ENCODE measurements at regions of chr22 and their contacts with region 1.

Region 1: GRCh38 chr22:38181453-38182247 is at the start of gene PLA2G6:
- DNase-seq: peak; percentile 86
- ATAC-seq: peak; percentile 91
- H3K4me3 ChIP-seq: peak within 1 kb of the TSS; percentile 48 to 59
- H3K27ac ChIP-seq: peak within 1 kb of the TSS; percentile 96
- H3K4me1 ChIP-seq: peaks cover 45% of the 10 kb centered on the region
- H3K27me3 ChIP-seq: no peaks in the 10 kb centered on the region
- CTCF ChIP-seq: no peak
- total RNA-seq, gene PLA2G6: 16.2 TPM

Region 2: DNA sequence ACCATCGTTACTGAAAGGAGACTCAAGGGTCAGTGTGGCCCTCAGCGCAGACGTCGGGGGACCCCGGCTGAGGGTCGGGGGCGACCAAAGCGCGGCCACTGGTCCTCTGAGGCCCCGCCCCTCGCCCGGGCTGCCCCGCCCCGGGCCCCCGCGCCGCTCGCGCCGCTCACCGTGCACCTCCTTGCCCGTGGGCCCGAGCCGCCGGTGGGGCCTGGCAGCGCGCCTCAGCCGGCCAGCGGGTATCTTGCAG is 338.0 kb before region 1 on chr22:
- CTCF ChIA-PET with region 1: no interaction called
- POLR2A ChIA-PET with region 1: no interaction called
- in situ Hi-C with region 1: no loop called
- intact Hi-C with region 1: no loop called
- DNase-seq: no peak
- ATAC-seq: peak; percentile 77
- H3K4me3 ChIP-seq: peak overlapping the region; percentile 65 to 86
- H3K27ac ChIP-seq: peak overlapping the region; percentile 86
- H3K4me1 ChIP-seq: 0 out of 2 replicates have a peak, but pooled peaks cover 3% of the 10 kb centered on the region
- H3K27me3 ChIP-seq: no peaks in the 10 kb centered on the region
- CTCF ChIP-seq: no peak

Region 3: DNA sequence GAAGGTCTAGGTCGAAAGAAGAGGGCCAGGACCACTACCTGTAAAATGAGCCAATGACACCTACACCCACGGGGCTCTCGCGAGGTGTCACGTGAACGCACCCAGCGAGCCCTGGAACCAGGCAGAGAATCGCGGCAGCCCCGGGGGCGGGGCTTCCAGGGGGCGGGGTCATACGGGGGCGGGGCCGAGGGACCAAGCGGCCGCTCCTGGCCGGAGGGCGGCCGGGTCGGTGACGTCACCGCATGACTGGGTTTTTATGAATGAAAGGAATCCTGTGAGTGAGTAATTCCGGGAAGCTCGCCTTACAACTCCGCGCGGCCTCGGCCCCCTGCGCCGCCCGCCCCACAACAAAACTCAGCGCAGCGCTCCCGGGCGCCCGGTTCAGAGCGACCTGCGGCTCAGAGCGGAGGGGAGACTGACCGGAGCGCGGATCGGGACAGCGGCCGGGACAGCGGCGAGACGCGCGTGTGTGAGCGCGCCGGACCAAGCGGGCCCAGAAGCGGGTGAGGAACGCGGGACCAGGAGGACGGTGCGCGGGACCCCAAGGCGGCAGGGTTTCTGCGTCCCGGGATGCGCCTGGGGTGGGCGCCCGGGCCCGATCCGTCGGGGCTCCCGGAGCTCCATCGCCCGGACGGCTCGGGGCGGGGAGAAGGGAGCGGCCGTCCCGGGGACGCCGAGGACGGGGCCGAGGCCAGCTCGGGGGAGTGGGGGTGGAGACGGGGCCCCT is 20.2 kb after region 1 on chr22 and contains the start of gene MAFF:
- CTCF ChIA-PET with region 1: no interaction called
- POLR2A ChIA-PET with region 1: interaction called, 14 read pairs
- in situ Hi-C with region 1: no loop called
- intact Hi-C with region 1: no loop called
- DNase-seq: no peak
- ATAC-seq: peak; percentile 89
- H3K4me3 ChIP-seq: peak within 1 kb of the TSS; percentile 62 to 93
- H3K27ac ChIP-seq: peak within 1 kb of the TSS; percentile 52; the same call in 1 of the 2 replicates
- H3K4me1 ChIP-seq: no peaks in the 10 kb centered on the region; the same call in 1 of the 2 replicates
- H3K27me3 ChIP-seq: no peaks in the 10 kb centered on the region
- CTCF ChIP-seq: no peak
- total RNA-seq, gene MAFF: 6.4 TPM

Region 4: DNA sequence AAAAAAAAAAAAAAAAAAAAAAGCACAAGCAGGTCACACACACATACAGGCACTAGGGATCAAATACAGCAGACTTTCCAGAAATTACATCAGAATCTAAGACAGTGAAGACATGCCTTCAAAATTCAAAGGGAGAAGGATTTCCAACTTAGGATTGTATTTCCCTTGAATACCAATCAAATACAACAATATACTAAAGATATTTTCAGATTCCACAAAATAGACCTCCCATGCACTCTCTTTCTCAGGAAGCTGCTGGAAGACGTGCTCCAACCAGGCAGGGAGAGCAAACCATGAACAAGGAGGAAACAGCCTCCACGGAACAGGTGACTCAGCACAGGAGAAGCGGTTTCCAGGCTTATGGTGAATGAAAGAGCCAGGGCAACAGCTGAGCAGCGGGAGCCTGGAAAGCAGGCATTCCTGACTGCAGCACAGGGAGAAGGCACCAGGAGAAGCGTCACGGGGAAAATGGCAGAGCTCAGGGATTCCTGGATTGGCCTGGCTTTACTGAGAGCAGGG is 59.1 kb after region 1 on chr22:
- CTCF ChIA-PET with region 1: no interaction called
- POLR2A ChIA-PET with region 1: no interaction called
- in situ Hi-C with region 1: no loop called
- intact Hi-C with region 1: no loop called
- DNase-seq: no peak
- ATAC-seq: peak; percentile 79
- H3K4me3 ChIP-seq: no peak overlapping the region
- H3K27ac ChIP-seq: peak overlapping the region; percentile 59; the same call in 1 of the 2 replicates
- H3K4me1 ChIP-seq: peaks cover 7% of the 10 kb centered on the region; the same call in 1 of the 2 replicates
- H3K27me3 ChIP-seq: no peaks in the 10 kb centered on the region
- CTCF ChIP-seq: no peak